ENCODE measurements at regions of chr11 and their contacts with region 1.

Region 1: DNA sequence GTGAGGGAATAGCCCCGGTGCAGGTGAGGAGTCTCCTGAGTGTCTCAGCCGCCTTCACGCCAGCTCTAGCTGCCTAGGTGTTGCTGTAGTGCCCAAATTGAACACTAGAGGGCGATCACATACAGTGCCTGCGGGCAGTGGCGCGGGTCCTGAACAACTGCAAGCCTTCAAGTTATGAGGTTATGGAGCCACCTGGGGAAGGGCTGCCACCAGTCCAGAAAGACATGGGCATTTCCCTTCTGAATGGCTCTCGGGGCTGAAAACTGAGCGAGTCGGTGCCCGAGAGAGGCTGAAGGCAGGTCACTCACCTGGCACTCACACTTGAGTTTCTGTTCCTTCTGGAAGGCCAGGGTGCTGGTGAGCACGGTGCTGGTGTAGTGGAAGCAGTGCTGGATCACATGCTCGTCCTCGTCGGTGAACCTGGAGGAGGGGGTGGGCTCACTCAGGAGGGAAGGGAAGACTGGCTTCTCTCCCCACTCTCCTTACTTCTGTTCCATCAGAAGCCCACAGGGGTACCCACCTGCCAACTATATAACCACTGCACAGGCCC is 88.4 kb downstream of the PDE2A start:
- DNase-seq: peak; percentile 77
- ATAC-seq: peak; percentile 50
- H3K4me3 Mint-ChIP-seq: peak overlapping the region; percentile 78
- H3K27ac Mint-ChIP-seq: no peak overlapping the region
- H3K4me1 Mint-ChIP-seq: peaks cover 21% of the 10 kb centered on the region
- H3K27me3 Mint-ChIP-seq: peaks cover 91% of the 10 kb centered on the region
- CTCF ChIP-seq: peak; percentile 97

Region 2: DNA sequence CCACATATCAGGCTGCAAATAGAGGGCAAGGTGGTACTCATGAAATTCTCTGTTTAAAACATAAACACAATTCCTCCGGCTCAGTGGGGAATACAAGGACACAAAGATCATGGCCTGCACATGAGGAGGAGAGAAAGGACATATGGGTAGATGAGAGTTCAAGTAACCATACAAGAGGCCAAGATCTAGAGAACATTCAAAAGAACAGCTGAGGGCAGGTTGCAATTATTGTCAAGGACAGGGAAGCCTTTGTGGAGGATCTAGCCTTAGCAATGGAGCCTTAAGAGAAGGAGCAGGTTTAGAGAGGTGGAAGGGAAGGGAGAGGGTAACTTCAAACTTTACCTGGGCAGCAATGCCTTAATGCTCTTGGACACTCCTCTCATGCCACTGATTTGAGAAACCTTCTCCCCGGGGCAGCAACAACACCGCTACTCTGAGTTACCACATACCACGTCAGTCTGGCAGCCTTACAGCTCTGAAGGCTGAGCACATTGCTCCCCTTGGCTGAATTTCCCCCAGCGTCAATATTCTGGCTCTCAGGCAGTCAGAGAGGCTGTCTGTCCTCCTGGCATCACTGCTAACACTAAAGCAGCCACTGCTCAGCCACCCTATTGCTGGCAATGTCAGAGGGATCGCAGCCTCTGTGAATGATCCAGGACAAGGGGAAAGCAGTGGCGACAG is 207.0 kb before region 1 on chr11:
- CTCF ChIA-PET with region 1: no interaction called
- POLR2A ChIA-PET with region 1: no interaction called
- DNase-seq: no peak
- ATAC-seq: no peak
- H3K4me3 Mint-ChIP-seq: no peak overlapping the region
- H3K27ac Mint-ChIP-seq: no peak overlapping the region
- H3K4me1 Mint-ChIP-seq: no peaks in the 10 kb centered on the region; the same call in 1 of the 2 replicates
- H3K27me3 Mint-ChIP-seq: no peaks in the 10 kb centered on the region
- CTCF ChIP-seq: no peak

Region 3: GRCh38 chr11:72396041-72396440 is 189.8 kb before region 1 on chr11:
- CTCF ChIA-PET with region 1: no interaction called
- POLR2A ChIA-PET with region 1: no interaction called
- DNase-seq: no peak
- ATAC-seq: no peak
- H3K4me3 Mint-ChIP-seq: no peak overlapping the region
- H3K27ac Mint-ChIP-seq: no peak overlapping the region
- H3K4me1 Mint-ChIP-seq: peaks cover 11% of the 10 kb centered on the region; the same call in 1 of the 2 replicates
- H3K27me3 Mint-ChIP-seq: no peaks in the 10 kb centered on the region
- CTCF ChIP-seq: no peak

Region 4: GRCh38 chr11:72573072-72573854 is 12.6 kb before region 1 on chr11:
- CTCF ChIA-PET with region 1: interaction called, 43 read pairs
- POLR2A ChIA-PET with region 1: no interaction called
- DNase-seq: peak; percentile 78
- ATAC-seq: peak; percentile 96
- H3K4me3 Mint-ChIP-seq: no peak overlapping the region
- H3K27ac Mint-ChIP-seq: no peak overlapping the region
- H3K4me1 Mint-ChIP-seq: peaks cover 4% of the 10 kb centered on the region; the same call in 1 of the 2 replicates
- H3K27me3 Mint-ChIP-seq: peaks cover 21% of the 10 kb centered on the region
- CTCF ChIP-seq: peak; percentile 60

Region 5: DNA sequence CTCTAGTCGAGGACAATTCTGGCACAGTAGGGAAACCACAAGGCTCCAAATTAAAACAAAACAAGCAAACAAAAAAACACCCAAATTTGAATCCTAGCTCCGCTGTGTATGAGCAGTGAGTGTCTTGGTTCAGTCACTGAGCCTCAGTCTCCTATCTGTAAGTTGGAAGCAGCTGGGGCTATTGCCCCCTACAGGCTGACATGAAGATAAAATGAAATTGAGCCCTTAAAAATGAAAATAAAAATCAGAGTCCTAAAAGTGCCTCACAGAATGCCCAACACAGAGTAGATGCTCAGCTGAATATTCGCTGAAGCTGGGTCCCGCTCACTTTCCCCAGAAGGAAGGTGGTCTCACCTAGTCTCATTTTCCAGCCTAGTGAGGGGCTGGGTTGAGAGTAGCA is 23.2 kb after region 1 on chr11:
- CTCF ChIA-PET with region 1: interaction called, 149 read pairs
- POLR2A ChIA-PET with region 1: no interaction called
- DNase-seq: no peak
- ATAC-seq: peak; percentile 47
- H3K4me3 Mint-ChIP-seq: no peak overlapping the region
- H3K27ac Mint-ChIP-seq: no peak overlapping the region
- H3K4me1 Mint-ChIP-seq: no peaks in the 10 kb centered on the region
- H3K27me3 Mint-ChIP-seq: peaks cover 3% of the 10 kb centered on the region
- CTCF ChIP-seq: no peak

Region 6: DNA sequence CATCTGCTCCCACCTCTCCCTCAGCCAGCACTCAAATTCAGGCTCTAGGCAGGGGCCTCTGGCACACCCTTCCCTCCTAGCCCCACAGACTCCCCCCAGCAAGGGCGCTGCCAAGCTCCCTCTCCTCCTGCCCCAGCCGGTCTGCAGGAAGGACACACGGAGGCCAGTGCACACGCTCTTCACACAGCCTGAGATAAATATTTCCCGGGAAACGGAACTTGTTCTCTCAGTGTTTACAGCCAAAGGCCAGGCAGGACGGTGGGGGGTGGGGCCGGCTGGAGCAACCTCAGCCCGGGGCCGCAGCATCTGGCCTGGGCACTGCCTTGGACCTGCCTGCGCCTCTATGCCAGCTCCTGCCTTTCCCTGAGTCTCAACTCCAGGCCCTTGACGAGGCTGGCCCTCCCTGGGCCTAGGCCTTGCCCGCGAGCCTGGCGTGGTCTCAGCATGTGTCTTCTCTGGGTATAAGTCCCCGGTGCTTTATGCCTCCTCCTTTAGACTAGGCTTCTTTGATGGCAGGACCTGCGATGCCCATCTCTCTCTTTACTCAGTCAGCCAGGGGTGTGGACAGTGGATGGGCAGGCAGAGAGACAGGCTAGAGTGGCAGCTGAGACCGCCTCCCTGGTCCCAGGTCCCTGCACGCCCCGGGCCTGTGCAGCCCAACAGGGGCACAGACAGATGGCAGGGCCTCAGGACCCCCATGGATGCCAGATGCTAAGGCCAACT is 40.0 kb after region 1 on chr11:
- CTCF ChIA-PET with region 1: interaction called, 15 read pairs
- POLR2A ChIA-PET with region 1: no interaction called
- DNase-seq: no peak
- ATAC-seq: peak; percentile 41
- H3K4me3 Mint-ChIP-seq: no peak overlapping the region
- H3K27ac Mint-ChIP-seq: no peak overlapping the region
- H3K4me1 Mint-ChIP-seq: peaks cover 3% of the 10 kb centered on the region
- H3K27me3 Mint-ChIP-seq: peaks cover 6% of the 10 kb centered on the region; the same call in 1 of the 2 replicates
- CTCF ChIP-seq: no peak

Region 7: DNA sequence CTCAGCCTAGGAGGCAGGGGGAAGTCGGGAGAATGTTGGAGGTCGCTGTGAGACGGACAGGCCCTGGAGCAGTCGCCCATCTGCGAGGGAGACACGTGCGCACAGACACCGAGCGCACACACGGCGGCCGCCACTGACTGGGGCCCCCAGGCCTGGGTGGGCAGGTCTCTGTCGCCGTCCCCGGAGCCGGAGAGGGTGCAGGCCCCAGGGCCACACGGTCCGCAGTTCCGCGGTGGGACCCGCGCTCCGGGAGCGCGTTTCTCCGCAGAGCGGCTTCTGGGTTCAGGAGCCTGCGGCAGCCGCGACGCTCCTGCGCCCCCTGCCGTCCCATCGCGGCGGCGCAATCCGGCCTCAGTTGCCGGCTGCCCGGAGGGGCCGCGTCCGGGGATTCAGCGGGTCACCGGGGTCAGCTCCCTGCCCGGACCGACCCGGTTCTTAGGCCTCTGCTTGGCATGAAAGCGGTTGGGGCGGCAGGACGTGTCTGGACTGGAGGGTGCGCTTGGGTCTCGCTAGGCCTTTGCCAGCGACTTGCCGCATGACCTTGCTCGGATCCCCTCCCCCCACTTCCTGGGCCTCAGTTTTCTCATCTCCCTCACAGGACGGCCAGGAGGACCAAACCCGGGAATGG is 57.2 kb after region 1 on chr11:
- CTCF ChIA-PET with region 1: interaction called, 124 read pairs
- POLR2A ChIA-PET with region 1: no interaction called
- DNase-seq: peak; percentile 74
- ATAC-seq: peak; percentile 79
- H3K4me3 Mint-ChIP-seq: peak overlapping the region; percentile 59
- H3K27ac Mint-ChIP-seq: no peak overlapping the region
- H3K4me1 Mint-ChIP-seq: no peaks in the 10 kb centered on the region
- H3K27me3 Mint-ChIP-seq: peaks cover 26% of the 10 kb centered on the region
- CTCF ChIP-seq: peak; percentile 98

Region 8: GRCh38 chr11:72668611-72669347 is 82.9 kb after region 1 on chr11:
- CTCF ChIA-PET with region 1: interaction called, 461 read pairs
- POLR2A ChIA-PET with region 1: no interaction called
- DNase-seq: no peak
- ATAC-seq: no peak
- H3K4me3 Mint-ChIP-seq: no peak overlapping the region
- H3K27ac Mint-ChIP-seq: no peak overlapping the region
- H3K4me1 Mint-ChIP-seq: peaks cover 17% of the 10 kb centered on the region
- H3K27me3 Mint-ChIP-seq: peaks cover 45% of the 10 kb centered on the region
- CTCF ChIP-seq: no peak